Dendritic cell treated with granulocyte-macrophage colony-stimulating factor and Interleukin-4, amounts not matched to agents 40 ng/mL and 50 ng/mL, for 4 days (primary cell): ENCODE measurements at regions of chr1 and their contacts with region 1.

Region 1: GRCh38 chr1:160607011-160607671 is 27.8 kb upstream of the CD84 start:
- H3K4me3 Mint-ChIP-seq: no peak overlapping the region
- H3K27ac Mint-ChIP-seq: peak overlapping the region; percentile 98
- H3K4me1 Mint-ChIP-seq: peaks cover 67% of the 10 kb centered on the region
- H3K27me3 Mint-ChIP-seq: no peaks in the 10 kb centered on the region

Region 2: DNA sequence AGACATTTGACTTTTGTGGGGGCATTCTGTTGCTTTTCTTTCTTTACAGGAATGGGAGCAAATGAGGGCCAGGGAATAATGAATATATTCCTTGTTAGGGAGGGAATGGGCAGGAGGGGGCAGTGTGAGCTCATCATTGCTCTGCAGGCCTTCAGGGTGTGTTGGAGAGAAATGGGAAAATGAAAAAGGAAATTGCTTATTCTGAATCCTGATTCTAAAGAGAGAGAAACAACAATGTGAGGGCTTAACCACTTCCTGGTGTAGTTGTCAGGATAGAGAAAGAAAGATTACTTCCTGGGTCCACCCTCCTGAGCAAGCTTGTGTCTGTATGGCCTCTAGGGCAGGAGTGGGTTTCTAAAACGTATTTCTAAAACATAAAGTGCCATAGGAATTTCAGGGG is 178.5 kb before region 1 on chr1:
- intact Hi-C with region 1: loop called (anchors 1 kb)
- H3K4me3 Mint-ChIP-seq: no peak overlapping the region
- H3K27ac Mint-ChIP-seq: peak overlapping the region; percentile 63
- H3K4me1 Mint-ChIP-seq: peaks cover 37% of the 10 kb centered on the region
- H3K27me3 Mint-ChIP-seq: no peaks in the 10 kb centered on the region

Region 3: GRCh38 chr1:160494620-160495019 is 112.5 kb before region 1 on chr1:
- intact Hi-C with region 1: loop called (anchors 2 kb)
- H3K4me3 Mint-ChIP-seq: no peak overlapping the region
- H3K27ac Mint-ChIP-seq: no peak overlapping the region
- H3K4me1 Mint-ChIP-seq: peaks cover 11% of the 10 kb centered on the region
- H3K27me3 Mint-ChIP-seq: no peaks in the 10 kb centered on the region

Region 4: DNA sequence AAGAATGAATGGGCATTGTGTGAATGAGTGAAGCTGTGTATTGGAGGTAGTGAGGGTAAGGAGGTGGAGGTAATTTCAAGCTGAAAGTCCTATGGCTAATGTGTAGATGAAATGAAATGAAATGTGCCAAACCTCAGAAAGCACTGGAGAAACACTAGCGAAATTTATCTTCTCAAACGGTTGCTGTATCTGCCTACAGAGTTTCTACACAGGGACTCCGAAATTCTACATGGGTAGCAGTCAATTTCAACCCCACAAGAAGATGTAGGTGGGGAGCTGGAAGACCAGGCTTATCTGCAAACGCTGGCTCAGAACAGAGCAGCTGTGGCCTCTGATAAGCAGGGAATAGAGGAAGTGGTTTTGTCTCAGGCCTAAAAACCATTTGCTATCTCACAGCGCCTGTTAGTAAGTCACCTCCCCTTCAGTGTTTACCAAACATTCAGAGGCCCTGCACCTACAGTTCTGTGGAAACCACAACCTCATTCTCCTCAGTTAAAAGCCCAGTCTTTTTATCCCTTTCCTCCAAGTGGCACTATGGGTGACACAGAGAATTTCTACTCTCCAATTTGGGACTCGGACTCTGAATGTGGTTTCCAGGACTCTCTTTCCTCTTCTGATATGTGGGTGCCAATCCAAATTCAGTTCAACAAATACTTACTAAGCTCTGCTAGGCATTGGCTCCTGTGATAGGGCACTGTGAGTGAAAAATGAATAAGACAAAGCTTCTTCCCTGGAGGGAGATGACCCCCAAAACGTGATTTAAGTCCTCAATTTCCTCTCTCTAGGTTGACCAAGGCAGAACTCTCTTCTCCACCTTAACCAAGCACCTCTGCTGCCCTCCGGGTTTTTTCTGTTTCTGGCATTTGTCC is 66.9 kb before region 1 on chr1:
- intact Hi-C with region 1: loop called (anchors 2 kb)
- H3K4me3 Mint-ChIP-seq: no peak overlapping the region
- H3K27ac Mint-ChIP-seq: peak overlapping the region; percentile 83
- H3K4me1 Mint-ChIP-seq: peaks cover 46% of the 10 kb centered on the region
- H3K27me3 Mint-ChIP-seq: no peaks in the 10 kb centered on the region